BJ (cell line): ENCODE measurements at regions of chr4 and their contacts with region 1.

Region 1: DNA sequence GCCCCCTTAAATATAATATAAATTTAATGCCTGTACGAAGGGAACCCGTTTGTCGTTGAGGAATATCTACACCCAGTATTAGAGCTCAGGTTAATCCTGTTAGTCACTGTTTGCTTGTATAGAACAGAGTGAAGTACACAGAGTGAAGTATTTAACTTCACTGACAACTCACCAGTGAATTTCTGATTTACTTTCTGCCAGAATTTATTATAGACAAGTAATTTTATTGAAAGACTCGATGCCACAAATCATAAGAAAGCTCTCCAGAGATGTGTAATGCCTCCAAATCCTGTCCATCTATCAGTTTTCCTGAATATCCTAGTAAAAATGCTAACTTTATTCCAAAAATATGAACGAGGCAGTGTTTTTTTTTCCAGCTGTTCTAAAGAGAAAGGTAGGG is 1.6 kb downstream of the GAB1 start:
- DNase-seq: no peak
- H3K4me3 ChIP-seq: peak overlapping the region; percentile 94
- H3K27me3 ChIP-seq: no peaks in the 10 kb centered on the region
- CTCF ChIP-seq: no peak

Region 2: GRCh38 chr4:142817442-142817841 is 520.9 kb before region 1 on chr4:
- CTCF ChIA-PET with region 1: no interaction called
- POLR2A ChIA-PET with region 1: no interaction called
- DNase-seq: peak; percentile 83
- H3K4me3 ChIP-seq: no peak overlapping the region
- H3K27me3 ChIP-seq: no peaks in the 10 kb centered on the region
- CTCF ChIP-seq: no peak

Region 3: GRCh38 chr4:143355540-143356217 is 17.4 kb after region 1 on chr4:
- CTCF ChIA-PET with region 1: interaction called, 5 read pairs
- POLR2A ChIA-PET with region 1: interaction called, 11 read pairs
- DNase-seq: no peak
- H3K4me3 ChIP-seq: no peak overlapping the region
- H3K27me3 ChIP-seq: no peaks in the 10 kb centered on the region
- CTCF ChIP-seq: no peak

Region 4: GRCh38 chr4:143381171-143382118 is 43.1 kb after region 1 on chr4:
- CTCF ChIA-PET with region 1: no interaction called
- POLR2A ChIA-PET with region 1: no interaction called
- DNase-seq: no peak
- H3K4me3 ChIP-seq: no peak overlapping the region
- H3K27me3 ChIP-seq: no peaks in the 10 kb centered on the region
- CTCF ChIP-seq: no peak

Region 5: GRCh38 chr4:143399113-143399949 is 61.0 kb after region 1 on chr4:
- CTCF ChIA-PET with region 1: no interaction called
- POLR2A ChIA-PET with region 1: no interaction called
- DNase-seq: no peak
- H3K4me3 ChIP-seq: no peak overlapping the region
- H3K27me3 ChIP-seq: no peaks in the 10 kb centered on the region
- CTCF ChIP-seq: peak; percentile 67

Region 6: GRCh38 chr4:143458966-143459365 is 120.7 kb after region 1 on chr4:
- CTCF ChIA-PET with region 1: no interaction called
- POLR2A ChIA-PET with region 1: no interaction called
- DNase-seq: no peak
- H3K4me3 ChIP-seq: no peak overlapping the region
- H3K27me3 ChIP-seq: no peaks in the 10 kb centered on the region
- CTCF ChIP-seq: no peak